ENCODE measurements at regions of chr1 and their contacts with region 1.

Region 1: DNA sequence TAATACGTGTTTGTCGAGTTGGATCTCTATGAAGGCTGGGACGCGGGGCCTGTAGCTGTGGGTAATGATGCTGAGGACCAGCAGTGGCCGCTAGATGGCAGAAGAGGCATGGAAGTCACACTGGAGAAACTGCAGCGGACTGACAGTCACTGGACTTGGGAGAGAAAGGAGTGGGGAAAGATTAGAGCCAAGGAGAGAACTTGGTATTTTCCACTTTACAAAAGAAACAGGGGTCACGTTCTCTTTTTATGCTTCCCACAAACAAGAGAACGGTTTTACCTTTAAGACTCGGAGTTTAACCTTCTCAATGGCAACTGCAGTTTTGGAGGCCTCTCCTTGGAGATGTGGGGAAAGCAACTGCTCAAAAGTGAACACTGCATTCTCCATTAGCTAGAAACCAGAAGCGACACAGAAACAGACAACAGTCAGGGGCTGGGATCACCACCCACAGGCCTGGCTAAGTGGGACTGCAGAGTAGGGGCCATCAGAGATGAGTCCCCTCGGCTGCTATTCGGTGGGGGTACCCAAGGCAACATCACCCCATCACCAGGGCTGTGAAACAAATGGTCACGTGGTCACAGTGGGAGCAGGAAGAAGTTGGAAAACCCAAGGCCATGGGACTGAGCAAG is 51.1 kb upstream of the EDEM3 start:
- DNase-seq: peak; percentile 96

Region 2: GRCh38 chr1:184827600-184828368 is 22.0 kb after region 1 on chr1:
- intact Hi-C with region 1: no loop called
- DNase-seq: no peak

Region 3: DNA sequence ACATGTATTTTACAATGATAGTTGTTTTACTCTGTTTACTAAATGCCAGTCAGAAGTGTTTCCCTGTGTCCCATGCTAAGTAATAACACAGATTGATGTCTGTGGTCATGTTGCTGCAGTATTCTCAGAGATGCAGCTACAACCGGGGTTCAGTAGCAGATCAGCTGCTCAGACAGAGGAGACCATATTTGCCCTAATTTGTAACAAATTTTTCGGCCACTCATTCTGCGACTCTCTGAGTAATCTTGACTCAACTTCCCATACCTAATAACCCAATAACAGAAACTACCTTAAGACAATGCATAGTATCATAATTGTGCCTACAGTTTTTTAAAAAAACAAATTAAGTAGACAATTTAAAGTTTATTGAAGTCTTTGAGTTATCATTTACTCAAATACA is 136.0 kb after region 1 on chr1:
- intact Hi-C with region 1: no loop called
- DNase-seq: no peak

Region 4: GRCh38 chr1:184982002-184982954 is 176.5 kb after region 1 on chr1:
- intact Hi-C with region 1: loop called (anchors 2 to 5 kb)
- DNase-seq: peak; percentile 94

Region 5: GRCh38 chr1:185159966-185160365 is 354.2 kb after region 1 on chr1:
- intact Hi-C with region 1: loop called in 1 of 2 experiments (anchors 10 kb)
- DNase-seq: no peak

Region 6: GRCh38 chr1:185534801-185535200 is 729.0 kb after region 1 on chr1:
- intact Hi-C with region 1: no loop called
- DNase-seq: no peak

Measured in posterior vena cava (tissue), 2 donors.